Stomach (tissue), 19 donors: ENCODE measurements at regions of chr15 and their contacts with region 1.

Region 1: GRCh38 chr15:81265944-81266775 is 57.8 kb downstream of the STARD5 start:
- DNase-seq: peak; percentile 83 to 93
- H3K4me3 ChIP-seq: peak overlapping the region in 2 of 4 donors; percentile 4 to 36
- H3K27ac ChIP-seq: no peak overlapping the region
- H3K4me1 ChIP-seq: peaks cover 9 to 16% (median 13%) of the 10 kb centered on the region in 4 donors
- H3K27me3 ChIP-seq: peaks cover 0 to 4% (median 0%) of the 10 kb centered on the region in 3 donors
- CTCF ChIP-seq: peak in 6 of 7 experiments; percentile 8 to 87 (median 80)
- EP300 ChIP-seq: no peak
- POLR2A ChIP-seq: no peak

Region 2: DNA sequence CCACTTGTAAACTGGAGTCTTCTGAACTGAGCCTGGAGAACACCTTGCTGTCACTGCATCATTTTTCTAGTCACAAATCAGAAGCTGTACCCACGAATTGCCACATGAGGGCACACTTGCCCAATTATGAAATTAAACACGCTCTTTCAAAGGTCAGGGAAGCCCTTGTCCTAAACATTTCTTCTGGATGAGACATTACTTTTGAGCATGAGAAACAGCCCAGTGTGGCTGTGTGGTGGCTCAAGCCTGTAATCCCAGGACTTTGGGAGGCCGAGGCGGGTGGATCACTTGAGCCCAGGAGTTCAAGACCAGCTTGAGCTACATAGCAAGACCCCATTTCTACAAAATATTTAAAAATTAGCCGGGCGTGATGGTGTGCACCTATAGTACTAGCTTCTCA is 159.6 kb before region 1 on chr15:
- intact Hi-C with region 1: loop called (anchors 5 kb)
- DNase-seq: peak; percentile 62 to 81
- H3K4me3 ChIP-seq: no peak overlapping the region
- H3K27ac ChIP-seq: no peak overlapping the region
- H3K4me1 ChIP-seq: peaks cover 0 to 6% (median 0%) of the 10 kb centered on the region in 4 donors
- H3K27me3 ChIP-seq: no peaks in the 10 kb centered on the region
- CTCF ChIP-seq: peak in 5 of 7 experiments; percentile 61 to 84 (median 74)
- EP300 ChIP-seq: no peak
- POLR2A ChIP-seq: no peak

Region 3: DNA sequence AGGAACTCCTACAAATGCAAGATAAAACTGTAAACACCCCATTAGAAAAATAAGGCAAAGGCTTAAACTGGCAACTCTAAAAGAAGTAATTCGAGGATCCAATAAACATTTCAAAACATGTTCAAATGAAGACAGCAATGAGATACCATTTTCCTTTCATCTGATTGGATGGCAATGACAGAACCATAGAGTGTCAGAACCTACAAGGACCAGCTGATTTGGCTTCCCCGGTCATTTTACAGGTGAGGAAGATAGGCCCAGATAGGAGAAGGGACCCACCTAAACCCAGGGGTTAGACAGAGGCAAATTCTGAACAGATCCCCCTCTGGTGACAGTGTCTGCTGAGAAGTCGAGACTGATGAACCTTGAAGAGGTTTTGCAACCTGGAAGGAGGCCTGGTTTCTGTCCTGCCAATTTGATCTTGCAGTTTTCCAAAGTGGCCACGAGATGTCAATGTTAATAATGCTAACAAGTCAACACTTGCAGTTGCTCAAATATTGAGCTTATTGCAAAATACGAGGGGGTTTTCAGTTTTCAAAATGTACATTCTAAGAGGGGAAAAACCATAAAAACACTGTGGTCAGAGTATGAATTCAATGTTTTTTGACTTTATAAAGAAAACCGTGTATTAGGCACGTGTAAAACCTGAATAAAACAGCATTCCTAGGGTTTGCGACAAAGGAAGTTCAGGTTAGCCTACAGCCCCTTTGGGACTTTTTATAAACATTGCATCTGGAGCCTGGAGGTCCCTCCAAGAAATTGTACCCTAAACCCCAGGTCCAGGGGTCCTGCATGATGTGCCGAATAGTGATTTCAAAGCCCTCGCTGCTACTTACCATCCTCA is 110.6 kb before region 1 on chr15:
- intact Hi-C with region 1: loop called (anchors 10 kb)
- DNase-seq: peak; percentile 36 to 62
- H3K4me3 ChIP-seq: no peak overlapping the region
- H3K27ac ChIP-seq: peak overlapping the region in 1 of 5 donors; percentile 8
- H3K4me1 ChIP-seq: peaks cover 3 to 26% (median 13%) of the 10 kb centered on the region in 4 donors
- H3K27me3 ChIP-seq: no peaks in the 10 kb centered on the region
- CTCF ChIP-seq: peak in 5 of 7 experiments; percentile 27 to 63 (median 35)
- EP300 ChIP-seq: no peak
- POLR2A ChIP-seq: no peak